ENCODE measurements at regions of chr5 and their contacts with region 1.

Region 1: DNA sequence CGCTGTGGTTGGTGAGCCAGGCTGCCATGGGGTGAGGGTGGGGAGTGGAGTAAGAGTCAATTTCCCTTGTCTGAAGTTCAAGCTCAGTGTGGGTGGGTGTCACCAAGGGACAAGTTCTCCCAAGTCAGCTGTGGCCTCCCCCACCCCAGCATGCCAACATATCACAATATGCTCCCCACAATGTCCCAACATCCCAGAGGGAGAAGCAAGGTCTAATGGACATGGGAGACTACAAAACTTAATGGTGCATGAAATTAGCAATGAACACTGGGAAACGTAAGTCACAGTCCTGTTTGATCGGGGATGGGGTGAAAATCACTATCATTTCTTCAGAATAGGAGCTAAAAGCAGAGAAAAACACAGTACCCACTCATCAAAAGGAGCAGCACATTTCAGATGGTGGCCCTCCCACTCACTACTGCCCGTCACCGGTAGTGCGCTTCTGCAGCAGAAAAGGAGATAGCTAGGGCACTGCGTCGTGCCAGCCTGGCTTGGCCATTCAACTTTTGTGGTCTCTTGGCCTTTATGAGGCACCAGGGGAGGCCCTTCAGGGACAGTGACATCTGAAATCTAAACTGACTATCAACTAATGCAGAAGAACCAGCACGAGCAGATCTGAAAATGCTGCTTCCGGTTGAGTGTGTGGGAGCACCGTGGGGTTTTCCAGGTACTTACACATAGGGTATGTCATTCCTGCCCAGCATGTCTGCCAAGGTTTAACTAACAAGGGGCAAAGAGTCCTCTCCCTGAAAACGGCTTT is 20.5 kb upstream of the NDFIP1 start:
- DNase-seq: no peak
- H3K4me3 ChIP-seq: no peak overlapping the region
- H3K4me3 Mint-ChIP-seq: peak overlapping the region; percentile 54
- H3K27ac Mint-ChIP-seq: peak overlapping the region; percentile 64
- H3K4me1 ChIP-seq: peaks cover 24% of the 10 kb centered on the region
- H3K4me1 Mint-ChIP-seq: peaks cover 20% of the 10 kb centered on the region
- H3K27me3 ChIP-seq: no peaks in the 10 kb centered on the region
- H3K27me3 Mint-ChIP-seq: no peaks in the 10 kb centered on the region
- CTCF ChIP-seq: no peak

Region 2: DNA sequence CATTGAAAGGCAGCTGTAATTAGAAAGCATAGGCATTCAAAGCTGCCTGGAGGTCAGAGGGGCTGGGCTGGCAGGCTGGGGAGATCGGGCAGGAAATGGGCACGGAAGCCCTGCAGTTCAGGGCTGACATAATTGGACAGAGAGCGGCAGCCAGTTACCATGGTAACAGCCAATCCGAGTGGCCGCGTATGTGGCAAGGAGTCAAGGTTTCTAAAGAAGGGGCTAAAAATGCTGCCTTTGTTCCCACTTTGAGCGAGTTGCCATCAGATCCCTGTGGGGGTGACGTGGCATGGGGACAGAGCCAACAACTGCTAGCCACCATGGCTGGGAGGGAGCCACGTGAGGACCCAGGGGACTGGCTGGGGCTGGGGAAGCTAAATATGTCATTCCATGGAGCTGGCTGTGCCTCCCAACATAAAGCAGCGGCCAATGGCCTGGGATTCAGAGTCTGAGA is 24.2 kb before region 1 on chr5:
- CTCF ChIA-PET with region 1: no interaction called
- POLR2A ChIA-PET with region 1: no interaction called
- intact Hi-C with region 1: no loop called
- DNase-seq: no peak
- H3K4me3 ChIP-seq: no peak overlapping the region
- H3K4me3 Mint-ChIP-seq: no peak overlapping the region
- H3K27ac Mint-ChIP-seq: no peak overlapping the region
- H3K4me1 ChIP-seq: no peaks in the 10 kb centered on the region
- H3K4me1 Mint-ChIP-seq: no peaks in the 10 kb centered on the region
- H3K27me3 ChIP-seq: no peaks in the 10 kb centered on the region
- H3K27me3 Mint-ChIP-seq: peaks cover 3% of the 10 kb centered on the region
- CTCF ChIP-seq: no peak

Region 3: GRCh38 chr5:142103360-142103740 is 15.2 kb after region 1 on chr5:
- CTCF ChIA-PET with region 1: interaction called, 4 read pairs
- POLR2A ChIA-PET with region 1: no interaction called
- intact Hi-C with region 1: loop called (anchors 2 kb)
- DNase-seq: no peak
- H3K4me3 ChIP-seq: no peak overlapping the region
- H3K4me3 Mint-ChIP-seq: no peak overlapping the region
- H3K27ac Mint-ChIP-seq: no peak overlapping the region
- H3K4me1 ChIP-seq: no peaks in the 10 kb centered on the region
- H3K4me1 Mint-ChIP-seq: peaks cover 7% of the 10 kb centered on the region
- H3K27me3 ChIP-seq: no peaks in the 10 kb centered on the region
- H3K27me3 Mint-ChIP-seq: no peaks in the 10 kb centered on the region
- CTCF ChIP-seq: no peak

Region 4: GRCh38 chr5:142108432-142109330 is 20.6 kb after region 1 on chr5 and contains the start of gene NDFIP1:
- CTCF ChIA-PET with region 1: no interaction called
- POLR2A ChIA-PET with region 1: interaction called, 4 read pairs
- intact Hi-C with region 1: loop called (anchors 1 kb)
- DNase-seq: peak; percentile 82 to 92
- H3K4me3 ChIP-seq: peak within 1 kb of the TSS; percentile 86
- H3K4me3 Mint-ChIP-seq: peak within 1 kb of the TSS; percentile 93
- H3K27ac Mint-ChIP-seq: peak within 1 kb of the TSS; percentile 82
- H3K4me1 ChIP-seq: peaks cover 15% of the 10 kb centered on the region
- H3K4me1 Mint-ChIP-seq: no peaks in the 10 kb centered on the region
- H3K27me3 ChIP-seq: no peaks in the 10 kb centered on the region
- H3K27me3 Mint-ChIP-seq: no peaks in the 10 kb centered on the region
- CTCF ChIP-seq: peak in 1 of 2 experiments; percentile 1
- total RNA-seq, gene NDFIP1: 49.0 and 51.6 TPM in 2 replicates

Measured in Caco-2 (cell line).